ENCODE measurements at regions of chr17 and their contacts with region 1.

Region 1: GRCh38 chr17:2853111-2853721 is 57.0 kb downstream of the RAP1GAP2 start:
- DNase-seq: peak; percentile 79
- H3K4me3 ChIP-seq: peak overlapping the region; percentile 66 to 69
- H3K27ac ChIP-seq: peak overlapping the region; percentile 66 to 90
- H3K4me1 ChIP-seq: peaks cover 4 to 42% of the 10 kb centered on the region in 2 experiments; a peak in 2 of 4 replicates
- H3K27me3 ChIP-seq: no peaks in the 10 kb centered on the region
- CTCF ChIP-seq: no peak
- EP300 ChIP-seq: no peak
- RAD21 ChIP-seq: no peak

Region 2: GRCh38 chr17:2904152-2904551 is 50.9 kb after region 1 on chr17:
- CTCF ChIA-PET with region 1: interaction called, 59 read pairs
- POLR2A ChIA-PET with region 1: interaction called, 69 read pairs
- DNase-seq: peak; percentile 78
- H3K4me3 ChIP-seq: no peak overlapping the region
- H3K27ac ChIP-seq: peak overlapping the region in 1 of 2 experiments; percentile 97; a peak in 2 of 4 replicates
- H3K4me1 ChIP-seq: peaks cover 0 to 80% of the 10 kb centered on the region in 2 experiments; a peak in 1 of 4 replicates
- H3K27me3 ChIP-seq: no peaks in the 10 kb centered on the region
- CTCF ChIP-seq: no peak
- EP300 ChIP-seq: peak in 1 of 2 experiments; percentile 62; a peak in 1 of 4 replicates
- RAD21 ChIP-seq: no peak; the same call in 1 of the 2 replicates

Measured in SK-N-SH (cell line).